CD4-positive, alpha-beta memory T cell (primary cell): ENCODE measurements at regions of chr20 and their contacts with region 1.

Region 1: GRCh38 chr20:51404298-51405060 is 138.0 kb downstream of the NFATC2 start:
- DNase-seq: peak; percentile 86 to 98 (median 90)
- H3K4me3 ChIP-seq: no peak overlapping the region
- H3K4me3 Mint-ChIP-seq: peak overlapping the region in 7 of 8 donors; percentile 43 to 94 (median 78)
- H3K27ac ChIP-seq: peak overlapping the region; percentile 96
- H3K27ac Mint-ChIP-seq: peak overlapping the region; percentile 99 to 100 (median 100)
- H3K4me1 ChIP-seq: peaks cover 97% of the 10 kb centered on the region
- H3K4me1 Mint-ChIP-seq: peaks cover 64 to 92% (median 77%) of the 10 kb centered on the region in 4 donors
- H3K27me3 ChIP-seq: no peaks in the 10 kb centered on the region
- H3K27me3 Mint-ChIP-seq: no peaks in the 10 kb centered on the region

Region 2: GRCh38 chr20:51417250-51418136 is 13.0 kb after region 1 on chr20:
- CTCF ChIA-PET with region 1: interaction called, 23 read pairs
- POLR2A ChIA-PET with region 1: interaction called, 148 read pairs
- intact Hi-C with region 1: loop called (anchors 1 kb)
- DNase-seq: peak; percentile 34 to 73 (median 44)
- H3K4me3 ChIP-seq: no peak overlapping the region
- H3K4me3 Mint-ChIP-seq: peak overlapping the region in 7 of 8 donors; percentile 54 to 84 (median 73)
- H3K27ac ChIP-seq: peak overlapping the region; percentile 65
- H3K27ac Mint-ChIP-seq: peak overlapping the region; percentile 87 to 97 (median 95)
- H3K4me1 ChIP-seq: peaks cover 85% of the 10 kb centered on the region
- H3K4me1 Mint-ChIP-seq: peaks cover 52 to 96% (median 71%) of the 10 kb centered on the region in 4 donors
- H3K27me3 ChIP-seq: no peaks in the 10 kb centered on the region
- H3K27me3 Mint-ChIP-seq: no peaks in the 10 kb centered on the region

Region 3: DNA sequence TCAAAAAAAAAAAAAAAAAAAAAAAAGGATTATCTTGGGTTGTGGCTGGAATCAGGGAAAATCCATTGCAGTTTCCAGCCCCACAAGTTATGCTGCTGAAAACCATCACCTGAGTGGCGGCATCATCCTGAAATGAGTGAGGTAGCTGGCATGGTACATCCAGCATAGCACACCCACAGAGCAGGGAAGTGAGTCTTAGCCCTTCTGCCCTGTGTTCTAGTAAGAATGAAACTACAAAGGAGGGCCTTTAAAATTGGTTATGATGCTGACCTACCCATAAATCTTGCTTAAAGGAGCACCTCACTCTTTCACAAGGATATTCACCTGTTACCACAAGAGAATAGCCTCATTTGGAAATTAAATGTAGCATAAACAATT is 18.8 kb after region 1 on chr20:
- CTCF ChIA-PET with region 1: interaction called, 23 read pairs
- POLR2A ChIA-PET with region 1: interaction called, 148 read pairs
- intact Hi-C with region 1: loop called (anchors 1 kb)
- DNase-seq: peak in 1 of 5 donors; percentile 30
- H3K4me3 ChIP-seq: no peak overlapping the region
- H3K4me3 Mint-ChIP-seq: peak overlapping the region in 7 of 8 donors; percentile 12 to 84 (median 79)
- H3K27ac ChIP-seq: peak overlapping the region; percentile 71
- H3K27ac Mint-ChIP-seq: peak overlapping the region; percentile 87 to 95 (median 94)
- H3K4me1 ChIP-seq: peaks cover 87% of the 10 kb centered on the region
- H3K4me1 Mint-ChIP-seq: peaks cover 60 to 95% (median 71%) of the 10 kb centered on the region in 4 donors
- H3K27me3 ChIP-seq: no peaks in the 10 kb centered on the region
- H3K27me3 Mint-ChIP-seq: no peaks in the 10 kb centered on the region

Region 4: GRCh38 chr20:51525241-51526129 is 121.0 kb after region 1 on chr20:
- CTCF ChIA-PET with region 1: no interaction called
- POLR2A ChIA-PET with region 1: interaction called, 6 read pairs
- intact Hi-C with region 1: loop called (anchors 5 kb)
- DNase-seq: peak; percentile 23 to 86 (median 31)
- H3K4me3 ChIP-seq: peak overlapping the region; percentile 17 to 22
- H3K4me3 Mint-ChIP-seq: peak overlapping the region; percentile 77 to 89 (median 86)
- H3K27ac ChIP-seq: peak overlapping the region; percentile 57
- H3K27ac Mint-ChIP-seq: peak overlapping the region; percentile 82 to 97 (median 92)
- H3K4me1 ChIP-seq: peaks cover 63% of the 10 kb centered on the region
- H3K4me1 Mint-ChIP-seq: peaks cover 59 to 87% (median 70%) of the 10 kb centered on the region in 4 donors
- H3K27me3 ChIP-seq: no peaks in the 10 kb centered on the region
- H3K27me3 Mint-ChIP-seq: no peaks in the 10 kb centered on the region